B cell (primary cell): ENCODE measurements at regions of chr3 and their contacts with region 1.

Region 1: GRCh38 chr3:49276475-49277382 is at the start of gene C3orf62:
- DNase-seq: peak; percentile 67
- ATAC-seq: peak; percentile 94
- H3K4me3 ChIP-seq: peak within 1 kb of the TSS; percentile 24 to 63 (median 58)
- H3K4me3 Mint-ChIP-seq: peak within 1 kb of the TSS; percentile 92
- H3K27ac ChIP-seq: peak within 1 kb of the TSS; percentile 80 to 89
- H3K27ac Mint-ChIP-seq: peak within 1 kb of the TSS; percentile 95
- H3K4me1 ChIP-seq: peaks cover 10 to 15% of the 10 kb centered on the region in 2 donors
- H3K4me1 Mint-ChIP-seq: peaks cover 21% of the 10 kb centered on the region
- H3K27me3 ChIP-seq: no peaks in the 10 kb centered on the region
- H3K27me3 Mint-ChIP-seq: no peaks in the 10 kb centered on the region
- CTCF ChIP-seq: no peak
- total RNA-seq, gene C3orf62: 7.8 and 10.4 TPM in 2 replicates

Region 2: GRCh38 chr3:49177073-49177472 is 99.7 kb before region 1 on chr3:
- CTCF ChIA-PET with region 1: no interaction called
- POLR2A ChIA-PET with region 1: no interaction called
- intact Hi-C with region 1: loop called (anchors 5 kb)
- DNase-seq: no peak
- ATAC-seq: no peak
- H3K4me3 ChIP-seq: no peak overlapping the region
- H3K4me3 Mint-ChIP-seq: no peak overlapping the region
- H3K27ac ChIP-seq: no peak overlapping the region
- H3K27ac Mint-ChIP-seq: no peak overlapping the region
- H3K4me1 ChIP-seq: no peaks in the 10 kb centered on the region
- H3K4me1 Mint-ChIP-seq: no peaks in the 10 kb centered on the region
- H3K27me3 ChIP-seq: peaks cover 0 to 19% (median 0%) of the 10 kb centered on the region in 4 experiments
- H3K27me3 Mint-ChIP-seq: peaks cover 19% of the 10 kb centered on the region
- CTCF ChIP-seq: no peak